Activated T-helper 1 cell treated with anti-CD3 and anti-CD28 coated beads, Interleukin-12 subunit alpha, Interleukin-12 subunit beta, Interleukin-2, Interleukin-4 antibody, amounts not matched to agents 30 ng/mL and 10 ng/mL and 1 ng/mL, durations not matched to agents 14 hours and 24 hours and 36 hours (primary cell): ENCODE measurements at regions of chr7 and their contacts with region 1.

Region 1: DNA sequence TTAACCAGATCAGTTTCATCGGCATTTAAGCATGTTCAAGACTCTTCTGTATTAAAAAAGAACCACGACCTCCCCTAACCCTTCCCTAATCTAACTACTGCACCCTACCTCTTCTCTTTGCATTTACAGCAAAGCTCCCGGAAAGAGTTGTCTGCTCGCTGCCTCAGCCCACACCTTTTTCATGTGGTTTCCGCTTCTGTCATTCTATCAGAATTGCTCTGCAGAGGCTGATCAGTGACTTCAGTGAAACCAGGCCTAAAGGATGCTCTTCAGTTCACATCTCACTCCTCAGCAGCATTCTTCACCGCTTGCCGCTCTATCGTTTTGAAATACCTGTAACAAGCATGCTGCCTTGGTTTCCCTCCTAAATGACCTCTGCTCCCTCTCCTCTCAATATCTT is 160.9 kb downstream of the SDK1 start:
- DNase-seq: peak; percentile 72
- H3K4me3 Mint-ChIP-seq: peak overlapping the region; percentile 72
- H3K27ac Mint-ChIP-seq: peak overlapping the region; percentile 74
- H3K4me1 Mint-ChIP-seq: peaks cover 32% of the 10 kb centered on the region
- H3K27me3 Mint-ChIP-seq: peaks cover 3% of the 10 kb centered on the region

Region 2: DNA sequence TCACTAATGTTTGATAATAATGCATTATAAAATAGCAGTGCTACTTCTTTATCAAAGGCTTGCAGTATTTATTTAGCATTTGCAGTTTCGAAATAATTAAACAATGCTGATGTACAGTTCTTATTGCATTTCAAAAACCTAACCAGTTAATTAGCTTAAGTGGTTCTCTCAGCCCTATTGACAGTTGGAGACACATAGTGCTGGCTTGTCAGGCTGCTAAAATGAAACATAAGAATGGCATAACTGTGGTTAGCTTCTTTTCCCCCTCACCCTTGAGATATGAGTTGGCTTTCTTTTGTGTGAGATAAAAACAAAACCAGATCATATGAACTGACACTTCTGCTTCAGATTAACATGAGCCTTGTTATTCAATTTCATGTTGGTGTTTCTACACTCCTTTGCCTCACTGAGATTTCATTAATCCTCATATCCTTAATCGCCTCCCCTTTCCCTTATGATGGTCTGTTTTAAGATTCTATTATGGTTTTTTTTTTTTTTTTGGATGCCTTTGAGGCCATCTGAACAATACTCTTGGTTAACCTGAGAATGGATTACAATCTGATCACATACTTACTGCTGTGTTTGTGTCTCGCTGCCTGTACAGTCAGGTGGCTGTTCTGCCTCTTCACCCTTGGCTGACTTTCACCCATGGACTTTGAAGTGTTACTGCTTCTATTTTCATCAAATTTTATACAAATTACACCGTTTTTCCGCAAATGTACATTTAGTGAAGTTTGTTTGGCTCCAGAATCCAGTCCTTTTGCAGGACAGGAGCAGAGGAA is 52.9 kb before region 1 on chr7:
- intact Hi-C with region 1: loop called (anchors 2 kb)
- DNase-seq: no peak
- H3K4me3 Mint-ChIP-seq: no peak overlapping the region
- H3K27ac Mint-ChIP-seq: no peak overlapping the region
- H3K4me1 Mint-ChIP-seq: peaks cover 13% of the 10 kb centered on the region
- H3K27me3 Mint-ChIP-seq: peaks cover 12% of the 10 kb centered on the region

Region 3: DNA sequence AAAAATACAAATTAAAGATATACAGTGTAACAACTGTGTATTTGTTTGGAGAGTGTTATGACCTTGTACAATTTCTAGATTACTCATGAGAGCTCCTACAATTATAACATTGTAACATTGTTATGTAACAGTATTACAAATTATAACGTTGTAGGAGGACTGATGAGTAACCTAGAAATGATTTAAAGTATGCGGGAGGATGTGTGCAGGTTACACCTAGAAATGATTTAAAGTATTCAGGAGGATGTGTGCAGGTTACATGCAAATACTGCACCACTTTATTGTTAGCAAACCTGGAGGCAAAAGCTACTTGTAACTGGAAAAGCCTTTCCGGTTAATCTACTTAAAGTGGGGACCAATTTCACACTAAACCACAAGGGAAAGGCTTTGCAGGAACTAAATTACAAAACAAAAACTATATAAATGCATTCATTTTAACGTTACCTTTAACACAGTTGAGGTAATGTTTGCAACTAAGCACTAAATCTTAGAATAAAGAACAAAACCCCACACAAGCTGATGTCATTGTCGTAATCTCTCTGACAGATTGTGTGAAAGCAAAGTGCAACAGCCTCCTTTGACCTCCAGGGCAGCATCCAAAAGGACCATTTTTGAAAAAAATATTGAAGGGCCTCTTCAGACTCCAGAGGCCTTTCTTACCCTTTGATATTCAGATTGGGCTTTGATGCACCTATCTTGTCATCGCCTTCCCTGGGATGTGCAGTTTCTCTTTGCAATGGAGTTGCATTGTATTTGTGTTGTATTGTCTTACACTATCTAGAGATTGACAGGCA is 698.0 kb after region 1 on chr7:
- intact Hi-C with region 1: no loop called
- DNase-seq: no peak
- H3K4me3 Mint-ChIP-seq: no peak overlapping the region
- H3K27ac Mint-ChIP-seq: no peak overlapping the region
- H3K4me1 Mint-ChIP-seq: no peaks in the 10 kb centered on the region
- H3K27me3 Mint-ChIP-seq: no peaks in the 10 kb centered on the region